ENCODE measurements at regions of chr1 and their contacts with region 1.

Region 1: GRCh38 chr1:151254217-151255213 is at the start of gene PSMD4:
- DNase-seq: peak; percentile 82 to 96 (median 93)
- ATAC-seq: peak; percentile 98
- H3K4me3 ChIP-seq: peak within 1 kb of the TSS; percentile 73
- H3K4me3 Mint-ChIP-seq: peak within 1 kb of the TSS; percentile 89 to 99 (median 96)
- H3K27ac ChIP-seq: peak within 1 kb of the TSS; percentile 79
- H3K27ac Mint-ChIP-seq: peak within 1 kb of the TSS; percentile 91 to 100 (median 95)
- H3K4me1 ChIP-seq: peaks cover 4 to 6% of the 10 kb centered on the region in 2 donors
- H3K4me1 Mint-ChIP-seq: peaks cover 23 to 47% (median 36%) of the 10 kb centered on the region in 7 donors
- H3K27me3 ChIP-seq: no peaks in the 10 kb centered on the region
- H3K27me3 Mint-ChIP-seq: peaks cover 0 to 3% (median 0%) of the 10 kb centered on the region in 5 donors
- total RNA-seq, gene PSMD4: 72.0 to 193 (median 126) TPM

Region 2: DNA sequence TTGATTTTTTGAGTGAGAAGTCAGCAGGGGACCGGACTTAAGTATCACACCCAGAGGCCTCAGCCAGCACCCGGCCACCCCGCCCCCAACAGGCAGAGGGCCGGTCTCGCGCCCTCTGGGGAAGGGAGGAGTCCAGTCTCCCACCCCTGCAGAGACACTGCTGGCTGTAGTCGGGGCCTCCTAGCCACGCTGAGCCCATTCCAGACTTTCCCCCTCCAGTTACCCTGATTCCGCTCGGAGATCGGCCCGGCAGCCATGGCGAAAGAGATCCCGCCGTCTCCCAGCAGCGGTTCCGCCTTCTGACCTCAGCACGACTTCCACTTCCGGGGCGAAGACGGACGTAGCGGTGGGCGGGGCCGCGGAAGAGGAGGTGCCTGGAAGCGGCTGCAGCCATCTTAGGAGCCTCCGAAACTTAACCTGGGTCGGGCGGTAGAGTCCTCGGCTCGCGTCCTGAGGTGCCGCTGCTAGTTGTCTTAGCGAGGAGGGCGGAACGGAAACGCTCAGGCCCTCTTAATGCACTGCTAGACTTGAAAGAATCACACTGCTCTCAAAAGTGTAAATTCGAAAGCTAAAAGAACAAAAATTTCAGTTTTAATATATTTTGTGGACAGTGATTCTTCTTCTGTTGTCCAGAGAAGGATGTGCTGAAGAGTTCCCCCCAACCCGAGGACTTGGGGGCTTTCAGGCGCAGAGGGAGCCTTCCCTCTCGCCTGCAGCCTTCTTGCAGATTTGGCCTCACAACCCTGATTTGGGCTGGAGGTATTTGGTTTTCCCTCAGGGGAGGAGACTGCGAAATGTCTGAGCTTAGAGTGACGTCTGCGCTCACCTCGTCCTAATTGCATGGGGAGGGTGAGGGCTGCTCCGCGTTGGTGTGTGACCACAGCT is 1326.8 kb before region 1 on chr1 and contains the start of gene SF3B4:
- CTCF ChIA-PET with region 1: no interaction called
- POLR2A ChIA-PET with region 1: no interaction called
- intact Hi-C with region 1: loop called in 1 of 2 experiments (anchors 2 kb)
- DNase-seq: peak; percentile 89 to 96 (median 95)
- ATAC-seq: peak; percentile 98
- H3K4me3 ChIP-seq: peak within 1 kb of the TSS; percentile 82
- H3K4me3 Mint-ChIP-seq: peak within 1 kb of the TSS; percentile 91 to 99 (median 96)
- H3K27ac ChIP-seq: peak within 1 kb of the TSS; percentile 94
- H3K27ac Mint-ChIP-seq: peak within 1 kb of the TSS; percentile 96 to 99 (median 98)
- H3K4me1 ChIP-seq: peaks cover 19 to 30% of the 10 kb centered on the region in 2 donors
- H3K4me1 Mint-ChIP-seq: peaks cover 44 to 67% (median 49%) of the 10 kb centered on the region in 7 donors
- H3K27me3 ChIP-seq: no peaks in the 10 kb centered on the region
- H3K27me3 Mint-ChIP-seq: peaks cover 0 to 13% (median 5%) of the 10 kb centered on the region in 5 donors
- total RNA-seq, gene SF3B4: 39.0 to 103 (median 43.4) TPM

Region 3: GRCh38 chr1:151008190-151008860 is 246.2 kb before region 1 on chr1 and contains the start of gene PRUNE1:
- CTCF ChIA-PET with region 1: interaction called, 6 read pairs
- POLR2A ChIA-PET with region 1: no interaction called
- intact Hi-C with region 1: loop called in 1 of 2 experiments (anchors 5 kb)
- DNase-seq: peak; percentile 87 to 98 (median 92)
- ATAC-seq: peak; percentile 96
- H3K4me3 ChIP-seq: peak within 1 kb of the TSS; percentile 88
- H3K4me3 Mint-ChIP-seq: peak within 1 kb of the TSS; percentile 91 to 100 (median 97)
- H3K27ac ChIP-seq: peak within 1 kb of the TSS; percentile 96
- H3K27ac Mint-ChIP-seq: peak within 1 kb of the TSS; percentile 92 to 99 (median 97)
- H3K4me1 ChIP-seq: peaks cover 32 to 45% of the 10 kb centered on the region in 2 donors
- H3K4me1 Mint-ChIP-seq: peaks cover 46 to 84% (median 70%) of the 10 kb centered on the region in 7 donors
- H3K27me3 ChIP-seq: no peaks in the 10 kb centered on the region
- H3K27me3 Mint-ChIP-seq: no peaks in the 10 kb centered on the region
- total RNA-seq, gene PRUNE1: 13.3 to 41.8 (median 17.2) TPM

Region 4: DNA sequence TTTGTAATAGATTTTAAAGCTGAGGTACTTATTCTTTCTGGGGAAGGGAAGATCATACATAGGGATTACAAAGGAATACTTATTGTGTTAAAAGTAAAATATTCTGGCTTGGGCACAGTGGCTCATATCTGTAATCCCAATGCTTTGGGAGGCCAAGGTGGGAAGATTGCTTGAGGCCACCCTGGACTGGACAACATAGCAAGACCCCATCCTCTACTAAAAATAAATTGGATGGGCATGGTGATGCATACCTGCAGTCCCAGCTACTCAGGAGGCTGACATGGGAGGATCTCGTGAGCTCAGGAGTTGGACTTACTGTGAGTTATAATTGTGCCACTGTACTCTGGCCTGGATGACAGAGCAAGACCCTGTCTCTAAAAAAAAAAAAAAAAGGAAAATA is 156.4 kb before region 1 on chr1:
- CTCF ChIA-PET with region 1: interaction called, 26 read pairs
- POLR2A ChIA-PET with region 1: no interaction called
- intact Hi-C with region 1: loop called in 1 of 2 experiments (anchors 1 kb)
- DNase-seq: no peak
- ATAC-seq: no peak
- H3K4me3 ChIP-seq: no peak overlapping the region
- H3K4me3 Mint-ChIP-seq: no peak overlapping the region
- H3K27ac ChIP-seq: no peak overlapping the region
- H3K27ac Mint-ChIP-seq: peak overlapping the region in 1 of 9 donors; percentile 25
- H3K4me1 ChIP-seq: no peaks in the 10 kb centered on the region
- H3K4me1 Mint-ChIP-seq: peaks cover 0 to 3% (median 0%) of the 10 kb centered on the region in 7 donors
- H3K27me3 ChIP-seq: no peaks in the 10 kb centered on the region
- H3K27me3 Mint-ChIP-seq: peaks cover 0 to 7% (median 0%) of the 10 kb centered on the region in 5 donors

Region 5: GRCh38 chr1:151189638-151190445 is 64.7 kb before region 1 on chr1 and contains the start of gene VPS72:
- CTCF ChIA-PET with region 1: interaction called, 14 read pairs
- POLR2A ChIA-PET with region 1: interaction called, 7 read pairs
- intact Hi-C with region 1: no loop called
- DNase-seq: peak; percentile 57 to 90 (median 85)
- ATAC-seq: peak; percentile 98
- H3K4me3 ChIP-seq: peak within 1 kb of the TSS; percentile 80
- H3K4me3 Mint-ChIP-seq: peak within 1 kb of the TSS; percentile 91 to 99 (median 98)
- H3K27ac ChIP-seq: peak within 1 kb of the TSS; percentile 78
- H3K27ac Mint-ChIP-seq: peak within 1 kb of the TSS; percentile 91 to 98 (median 97)
- H3K4me1 ChIP-seq: peaks cover 16% of the 10 kb centered on the region in 2 donors
- H3K4me1 Mint-ChIP-seq: peaks cover 23 to 47% (median 35%) of the 10 kb centered on the region in 7 donors
- H3K27me3 ChIP-seq: no peaks in the 10 kb centered on the region
- H3K27me3 Mint-ChIP-seq: peaks cover 0 to 8% (median 0%) of the 10 kb centered on the region in 5 donors
- total RNA-seq, gene VPS72: 35.1 to 82.0 (median 63.9) TPM

Region 6: GRCh38 chr1:151281969-151282882 is 27.7 kb after region 1 on chr1 and contains the start of gene ZNF687:
- CTCF ChIA-PET with region 1: interaction called, 6 read pairs
- POLR2A ChIA-PET with region 1: interaction called, 7 read pairs
- intact Hi-C with region 1: loop called (anchors 1 kb)
- DNase-seq: peak; percentile 93 to 99 (median 99)
- ATAC-seq: peak; percentile 91
- H3K4me3 ChIP-seq: peak within 1 kb of the TSS; percentile 96
- H3K4me3 Mint-ChIP-seq: peak within 1 kb of the TSS; percentile 93 to 100 (median 97)
- H3K27ac ChIP-seq: peak within 1 kb of the TSS; percentile 87
- H3K27ac Mint-ChIP-seq: peak within 1 kb of the TSS; percentile 92 to 100 (median 96)
- H3K4me1 ChIP-seq: peaks cover 10 to 11% of the 10 kb centered on the region in 2 donors
- H3K4me1 Mint-ChIP-seq: peaks cover 20 to 42% (median 27%) of the 10 kb centered on the region in 7 donors
- H3K27me3 ChIP-seq: no peaks in the 10 kb centered on the region
- H3K27me3 Mint-ChIP-seq: no peaks in the 10 kb centered on the region
- total RNA-seq, gene ZNF687: 30.4 to 38.1 (median 32.3) TPM

Region 7: GRCh38 chr1:151399890-151400495 is 145.5 kb after region 1 on chr1:
- CTCF ChIA-PET with region 1: no interaction called
- POLR2A ChIA-PET with region 1: interaction called, 5 read pairs
- intact Hi-C with region 1: loop called (anchors 1 kb)
- DNase-seq: peak in 3 of 9 donors; percentile 2 to 10 (median 10)
- ATAC-seq: peak; percentile 15
- H3K4me3 ChIP-seq: peak overlapping the region; percentile 95
- H3K4me3 Mint-ChIP-seq: peak overlapping the region; percentile 84 to 99 (median 94)
- H3K27ac ChIP-seq: peak overlapping the region; percentile 98
- H3K27ac Mint-ChIP-seq: peak overlapping the region; percentile 94 to 99 (median 98)
- H3K4me1 ChIP-seq: peaks cover 13 to 14% of the 10 kb centered on the region in 2 donors
- H3K4me1 Mint-ChIP-seq: peaks cover 11 to 34% (median 28%) of the 10 kb centered on the region in 7 donors
- H3K27me3 ChIP-seq: no peaks in the 10 kb centered on the region
- H3K27me3 Mint-ChIP-seq: peaks cover 0 to 12% (median 0%) of the 10 kb centered on the region in 5 donors